ENCODE measurements at regions of chr3 and their contacts with region 1.

Region 1: DNA sequence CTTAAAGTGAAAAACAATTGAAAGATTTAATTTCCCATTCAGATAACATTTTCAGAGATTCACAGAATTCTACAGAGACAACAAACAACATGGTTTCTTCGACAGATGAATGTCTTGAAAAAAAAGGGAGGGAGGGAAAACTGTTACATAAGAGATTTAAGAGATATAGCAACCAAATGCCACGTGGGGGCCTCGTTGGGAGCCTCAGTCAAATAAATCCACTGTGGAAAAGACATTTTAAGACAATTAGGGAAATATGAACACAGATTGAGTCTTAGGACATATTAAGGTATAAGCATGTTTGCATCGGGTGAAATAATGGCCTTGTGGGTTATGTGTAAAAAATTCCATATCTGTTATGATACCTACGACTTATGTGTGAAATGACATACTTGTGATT is 5.0 kb upstream of the PRRT3 start:
- DNase-seq: no peak
- H3K4me3 ChIP-seq: no peak overlapping the region
- H3K27ac ChIP-seq: no peak overlapping the region
- H3K4me1 ChIP-seq: peaks cover 11 to 19% (median 14%) of the 10 kb centered on the region in 4 experiments
- H3K27me3 ChIP-seq: peaks cover 0 to 11% (median under 1%) of the 10 kb centered on the region in 4 experiments; a peak in 3 of 7 replicates
- CTCF ChIP-seq: no peak
- EP300 ChIP-seq: no peak
- POLR2A ChIP-seq: no peak
- RAD21 ChIP-seq: no peak

Region 2: DNA sequence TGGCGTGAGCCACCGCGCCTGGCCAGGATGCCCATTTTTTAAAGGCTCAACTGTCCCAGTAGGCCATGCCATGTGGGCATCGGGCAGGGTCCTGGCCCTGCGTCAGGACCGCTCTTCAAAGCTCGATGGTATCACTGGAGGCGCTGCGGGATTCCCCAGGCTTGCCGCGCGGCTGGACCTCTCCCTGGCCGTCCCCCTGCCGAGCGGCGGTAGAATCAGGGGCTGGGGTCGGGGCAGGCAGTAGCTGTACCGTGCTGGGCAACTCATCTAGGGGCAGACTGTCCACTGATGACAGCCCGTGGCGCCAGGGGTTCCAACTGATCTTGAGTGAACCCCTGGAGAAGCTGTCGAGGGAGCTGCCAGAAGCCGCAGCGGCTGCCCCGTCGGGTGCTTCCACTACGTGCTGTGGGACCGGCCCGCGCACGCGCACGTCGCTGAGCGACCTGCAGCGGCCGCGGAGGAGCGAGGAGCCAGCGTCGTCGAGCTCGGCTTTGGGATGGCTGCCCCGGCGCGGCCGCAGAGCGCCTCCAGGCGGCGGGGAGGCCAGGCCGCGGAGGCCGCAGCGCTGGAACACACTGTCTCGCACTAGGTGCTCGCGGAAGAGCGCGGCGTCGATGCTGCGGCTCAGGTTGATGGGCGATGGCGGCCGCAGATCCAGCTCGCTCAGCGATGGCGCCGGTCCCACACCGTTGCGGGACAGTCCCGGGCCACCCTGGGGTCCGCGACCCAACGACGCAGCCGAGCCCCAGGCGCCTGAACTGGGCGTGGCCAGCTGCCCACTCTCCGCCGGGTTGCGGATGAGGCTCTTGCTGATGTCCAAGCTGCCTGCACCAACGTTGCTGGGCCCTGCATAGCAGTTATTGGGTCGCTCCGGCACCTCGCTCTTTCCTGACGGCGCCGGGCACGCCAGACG is 10.8 kb before region 1 on chr3:
- CTCF ChIA-PET with region 1: interaction called, 14 read pairs
- POLR2A ChIA-PET with region 1: interaction called, 19 read pairs
- DNase-seq: peak; percentile 70 to 89
- H3K4me3 ChIP-seq: peak overlapping the region; percentile 42 to 69 (median 51)
- H3K27ac ChIP-seq: no peak overlapping the region
- H3K4me1 ChIP-seq: peaks cover 0 to 8% (median 4%) of the 10 kb centered on the region in 4 experiments; a peak in 5 of 7 replicates
- H3K27me3 ChIP-seq: no peaks in the 10 kb centered on the region
- CTCF ChIP-seq: peak in 2 of 3 experiments; percentile 89 to 92; a peak in 3 of 4 replicates
- EP300 ChIP-seq: peak in 1 of 2 experiments; percentile 71; a peak in 1 of 3 replicates
- POLR2A ChIP-seq: peak in 1 of 2 experiments; percentile 69; a peak in 2 of 3 replicates
- RAD21 ChIP-seq: peak; percentile 70 to 78